ENCODE measurements at regions of chr7 and their contacts with region 1.

Region 1: DNA sequence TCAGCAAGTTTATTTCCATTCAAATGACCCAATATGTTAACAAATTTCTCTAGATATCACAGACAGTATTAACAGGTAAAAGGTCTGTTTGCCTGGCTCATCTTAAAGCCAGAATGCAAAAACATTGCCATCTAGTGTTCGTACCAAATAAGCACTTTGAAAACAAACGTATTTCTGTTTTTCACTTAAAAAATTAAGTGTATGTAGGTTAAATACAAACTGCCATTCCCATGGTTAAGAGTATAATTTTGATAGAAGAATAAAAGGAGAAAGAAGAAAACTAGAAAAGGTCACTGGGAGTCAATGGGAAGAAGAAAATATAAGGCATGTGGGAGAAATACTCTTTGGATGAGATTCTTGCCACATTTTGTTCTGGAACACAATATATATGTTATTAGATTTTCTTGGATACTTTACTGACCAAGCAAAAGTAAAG is 51.0 kb downstream of the ORC5 start:
- DNase-seq: no peak
- H3K4me3 ChIP-seq: no peak overlapping the region
- H3K27ac ChIP-seq: no peak overlapping the region
- H3K4me1 ChIP-seq: no peaks in the 10 kb centered on the region
- H3K27me3 ChIP-seq: no peaks in the 10 kb centered on the region
- CTCF ChIP-seq: peak in 3 of 4 experiments; percentile 37 to 52 (median 43)
- POLR2A ChIP-seq: no peak

Region 2: GRCh38 chr7:103094102-103094501 is 1062.8 kb before region 1 on chr7:
- intact Hi-C with region 1: no loop called
- DNase-seq: no peak
- H3K4me3 ChIP-seq: no peak overlapping the region
- H3K27ac ChIP-seq: no peak overlapping the region
- H3K4me1 ChIP-seq: no peaks in the 10 kb centered on the region
- H3K27me3 ChIP-seq: no peaks in the 10 kb centered on the region
- CTCF ChIP-seq: peak in 2 of 4 experiments; percentile 18 to 28
- POLR2A ChIP-seq: no peak

Region 3: DNA sequence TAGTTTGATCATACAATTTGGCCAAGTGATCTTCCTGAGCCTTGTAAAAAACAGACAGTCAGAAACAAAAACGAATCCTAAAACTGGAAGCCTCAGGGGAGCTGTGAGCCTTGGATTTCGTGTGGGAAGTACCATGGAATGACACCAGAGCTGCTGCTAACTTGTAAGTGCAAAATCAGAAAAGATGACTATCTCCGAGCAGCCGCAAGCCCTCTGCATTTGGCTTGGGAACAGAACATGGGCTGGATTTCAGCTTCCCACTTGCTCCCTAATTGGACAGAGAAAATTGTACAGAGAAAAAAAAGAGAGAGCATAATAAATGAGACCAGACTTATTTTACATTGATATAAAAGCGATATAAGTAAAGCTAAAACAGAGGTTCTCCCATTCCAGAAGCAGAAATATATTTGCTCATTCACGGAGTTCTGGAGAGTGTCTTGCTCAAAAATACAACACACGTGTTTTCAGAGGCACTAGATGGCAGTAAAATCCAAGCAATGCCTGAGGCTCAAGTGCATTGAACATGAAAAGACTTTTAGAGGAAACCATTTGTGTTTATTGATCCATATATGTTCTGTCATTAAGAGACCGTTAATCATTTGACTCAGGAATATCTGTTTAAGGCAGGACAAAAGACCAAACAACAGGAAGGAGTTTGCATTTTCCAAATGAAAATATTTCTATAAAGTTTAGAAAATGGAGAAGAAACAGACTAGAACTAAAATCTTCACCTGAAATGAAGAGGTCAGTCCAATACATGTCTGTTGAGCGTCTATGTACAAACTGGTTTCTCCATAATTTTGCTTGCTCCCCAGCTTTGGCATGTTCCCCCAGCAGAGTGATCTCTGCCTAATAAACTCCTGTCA is 632.6 kb before region 1 on chr7:
- intact Hi-C with region 1: loop called (anchors 10 kb)
- DNase-seq: no peak
- H3K4me3 ChIP-seq: no peak overlapping the region
- H3K27ac ChIP-seq: no peak overlapping the region
- H3K4me1 ChIP-seq: no peaks in the 10 kb centered on the region
- H3K27me3 ChIP-seq: no peaks in the 10 kb centered on the region
- CTCF ChIP-seq: peak in 2 of 4 experiments; percentile 14 to 42
- POLR2A ChIP-seq: no peak

Region 4: DNA sequence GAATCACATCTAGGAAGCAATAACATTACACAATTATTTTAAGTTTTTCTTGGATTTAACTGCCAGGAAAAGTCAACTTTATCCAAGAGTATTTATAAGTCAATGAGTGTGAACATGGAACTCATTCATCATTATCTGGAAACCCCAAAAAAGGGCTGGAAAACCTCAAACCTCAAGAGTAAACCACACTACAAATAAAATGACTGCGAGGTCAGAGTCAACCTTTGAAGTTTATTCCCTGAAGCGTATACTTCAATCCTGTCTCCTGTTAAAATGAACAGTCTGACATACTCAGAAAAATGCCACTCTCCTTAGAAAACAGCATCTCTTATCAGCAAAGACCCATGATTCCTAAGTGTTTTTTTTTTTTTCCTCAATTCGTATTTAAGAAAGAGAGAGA is 253.9 kb before region 1 on chr7:
- intact Hi-C with region 1: no loop called
- DNase-seq: no peak
- H3K4me3 ChIP-seq: no peak overlapping the region
- H3K27ac ChIP-seq: no peak overlapping the region
- H3K4me1 ChIP-seq: no peaks in the 10 kb centered on the region
- H3K27me3 ChIP-seq: no peaks in the 10 kb centered on the region
- CTCF ChIP-seq: no peak
- POLR2A ChIP-seq: no peak